ENCODE measurements at regions of chr13 and their contacts with region 1.

Region 1: GRCh38 chr13:99436686-99437416 is 64.4 kb upstream of the TM9SF2 start:
- DNase-seq: peak; percentile 63
- H3K4me3 ChIP-seq: peak overlapping the region in 1 of 4 donors; percentile 19
- H3K27ac ChIP-seq: no peak overlapping the region
- H3K4me1 ChIP-seq: peaks cover 5 to 31% (median 7%) of the 10 kb centered on the region in 3 donors
- H3K27me3 ChIP-seq: peaks cover 0 to 23% (median 0%) of the 10 kb centered on the region in 4 donors
- CTCF ChIP-seq: peak; percentile 99 to 100 (median 100)
- POLR2A ChIP-seq: no peak

Region 2: DNA sequence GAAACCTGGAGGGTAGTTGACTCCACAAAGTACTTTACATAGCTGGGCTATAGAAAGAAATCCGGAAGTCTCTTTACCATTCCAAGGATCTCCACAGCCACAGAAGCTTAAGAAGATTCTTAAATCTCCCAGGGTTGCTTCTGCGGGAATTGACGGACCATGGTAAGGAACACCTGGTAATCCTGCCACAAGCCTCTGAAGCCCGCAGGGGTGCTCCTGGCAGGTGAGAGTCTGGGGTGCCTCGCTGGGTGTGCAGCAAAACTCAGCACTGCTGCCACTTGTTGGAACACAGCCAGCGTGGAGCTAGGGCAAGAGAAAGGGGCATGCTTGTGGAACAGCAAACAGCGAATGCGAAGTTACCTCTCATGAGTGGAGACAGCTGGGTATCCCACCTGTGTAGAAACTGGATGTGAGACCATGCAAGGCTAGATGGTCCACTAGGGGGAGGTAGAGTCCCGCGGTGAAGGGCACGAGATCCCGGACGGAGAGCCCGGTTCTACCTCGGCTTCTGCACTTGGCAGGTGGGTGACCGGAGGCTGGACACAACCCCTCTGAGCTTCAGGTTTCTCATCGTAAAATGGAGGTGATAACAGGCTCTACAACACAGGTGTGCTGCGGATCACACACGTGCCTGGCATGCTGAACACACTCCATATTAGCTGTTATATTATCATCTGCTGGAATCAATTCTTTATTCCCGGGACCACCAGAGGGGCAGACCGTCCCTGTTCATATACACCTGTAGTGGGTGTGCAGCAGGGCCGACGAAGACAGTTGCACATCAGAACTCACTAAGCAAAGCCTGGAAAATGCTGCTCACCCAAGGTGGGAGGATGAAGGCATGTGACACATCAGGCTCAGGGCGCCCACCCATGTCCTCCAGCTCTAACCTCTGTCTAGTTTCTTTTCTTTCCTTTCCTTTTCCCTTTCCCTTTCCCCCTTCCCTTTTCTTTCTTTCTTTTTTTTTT is 260.3 kb before region 1 on chr13:
- intact Hi-C with region 1: loop called (anchors 5 kb)
- DNase-seq: no peak
- H3K4me3 ChIP-seq: peak overlapping the region in 1 of 4 donors; percentile 43
- H3K27ac ChIP-seq: no peak overlapping the region
- H3K4me1 ChIP-seq: peaks cover 6 to 40% (median 7%) of the 10 kb centered on the region in 3 donors
- H3K27me3 ChIP-seq: peaks cover 0 to 6% (median 0%) of the 10 kb centered on the region in 4 donors
- CTCF ChIP-seq: peak; percentile 82 to 94 (median 88)
- POLR2A ChIP-seq: no peak

Region 3: DNA sequence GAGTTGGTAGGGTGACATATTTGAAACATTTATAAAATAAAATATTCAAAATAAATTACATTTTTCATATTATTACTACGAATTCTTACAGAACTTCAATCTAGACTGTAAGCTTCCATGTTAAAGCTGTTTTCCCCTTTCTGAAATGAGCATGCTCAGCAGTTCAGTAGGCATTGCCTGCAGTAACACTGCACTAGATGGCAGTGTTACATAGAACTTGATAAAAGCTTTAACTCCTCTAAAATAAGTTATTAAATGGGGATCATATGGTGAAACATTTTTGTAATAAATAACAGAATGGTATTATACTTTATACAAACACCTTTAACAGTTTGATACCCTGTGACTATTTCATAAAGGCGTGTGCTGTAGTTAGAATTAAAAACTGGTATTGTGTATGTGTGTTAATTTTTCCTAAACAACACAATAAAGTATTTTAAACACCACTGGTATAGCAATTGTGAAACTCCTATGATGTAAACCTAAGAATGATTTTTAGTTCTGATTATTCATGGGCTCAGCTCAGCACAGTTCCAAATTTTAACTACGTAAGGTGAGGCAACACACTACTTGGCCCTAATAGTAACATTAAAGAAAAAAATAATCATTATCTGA is 167.1 kb before region 1 on chr13:
- intact Hi-C with region 1: loop called (anchors 5 kb)
- DNase-seq: no peak
- H3K4me3 ChIP-seq: no peak overlapping the region
- H3K27ac ChIP-seq: peak overlapping the region in 3 of 4 donors; percentile 6 to 41 (median 9)
- H3K4me1 ChIP-seq: peaks cover 0 to 2% (median 0%) of the 10 kb centered on the region in 3 donors
- H3K27me3 ChIP-seq: no peaks in the 10 kb centered on the region
- CTCF ChIP-seq: peak; percentile 48 to 77 (median 70)
- POLR2A ChIP-seq: no peak

Region 4: GRCh38 chr13:99335603-99336002 is 101.2 kb before region 1 on chr13:
- intact Hi-C with region 1: no loop called
- DNase-seq: no peak
- H3K4me3 ChIP-seq: no peak overlapping the region
- H3K27ac ChIP-seq: no peak overlapping the region
- H3K4me1 ChIP-seq: peaks cover 0 to 5% (median 0%) of the 10 kb centered on the region in 3 donors
- H3K27me3 ChIP-seq: no peaks in the 10 kb centered on the region
- CTCF ChIP-seq: no peak
- POLR2A ChIP-seq: no peak

Measured in esophagus squamous epithelium (tissue), 5 donors.